RWPE1 (cell line): ENCODE measurements at regions of chr15 and their contacts with region 1.

Region 1: GRCh38 chr15:31326156-31326732 is 391 bp upstream of the KLF13 start:
- DNase-seq: peak; percentile 99
- H3K27ac ChIP-seq: peak overlapping the region; percentile 99
- CTCF ChIP-seq: no peak

Region 2: DNA sequence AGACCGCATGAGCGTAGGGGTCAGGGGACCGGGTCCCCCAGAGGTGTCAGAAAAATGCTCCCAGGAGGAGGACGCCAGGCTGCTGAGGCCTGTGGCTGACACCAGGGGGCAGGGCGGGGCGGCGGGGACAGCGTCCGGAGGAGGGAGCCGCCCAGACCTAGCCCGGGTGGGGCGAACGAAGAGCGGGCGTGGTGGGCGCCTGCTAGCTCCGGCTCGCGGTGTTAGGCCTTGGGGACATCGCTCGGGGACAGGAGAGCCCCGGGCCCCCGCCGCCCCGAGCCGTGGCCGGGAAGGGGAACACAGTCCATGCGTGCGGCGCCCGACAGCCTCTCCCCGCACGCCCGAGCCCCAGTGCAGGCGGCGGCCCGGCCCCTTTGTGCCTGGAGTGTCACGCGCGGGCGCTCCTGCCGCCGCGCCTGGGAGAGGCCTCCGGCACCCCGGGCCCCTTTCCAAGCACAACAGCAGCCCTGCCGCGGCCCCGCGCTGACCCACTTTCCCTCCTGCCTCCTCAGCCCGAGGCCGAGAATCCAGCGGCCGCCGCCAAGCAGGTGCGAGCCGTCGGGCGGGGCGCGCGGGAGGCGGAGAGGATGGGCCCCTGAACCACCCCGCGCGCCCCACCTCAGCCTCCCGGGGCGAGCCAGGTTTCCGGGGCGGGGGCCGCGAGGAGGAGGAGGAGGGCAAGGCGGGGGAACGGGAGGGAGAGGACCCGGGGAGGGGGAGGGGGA is 110.6 kb before region 1 on chr15:
- CTCF ChIA-PET with region 1: no interaction called
- POLR2A ChIA-PET with region 1: interaction called, 11 read pairs
- DNase-seq: peak; percentile 76
- H3K27ac ChIP-seq: peak overlapping the region; percentile 100
- CTCF ChIP-seq: peak; percentile 88

Region 3: DNA sequence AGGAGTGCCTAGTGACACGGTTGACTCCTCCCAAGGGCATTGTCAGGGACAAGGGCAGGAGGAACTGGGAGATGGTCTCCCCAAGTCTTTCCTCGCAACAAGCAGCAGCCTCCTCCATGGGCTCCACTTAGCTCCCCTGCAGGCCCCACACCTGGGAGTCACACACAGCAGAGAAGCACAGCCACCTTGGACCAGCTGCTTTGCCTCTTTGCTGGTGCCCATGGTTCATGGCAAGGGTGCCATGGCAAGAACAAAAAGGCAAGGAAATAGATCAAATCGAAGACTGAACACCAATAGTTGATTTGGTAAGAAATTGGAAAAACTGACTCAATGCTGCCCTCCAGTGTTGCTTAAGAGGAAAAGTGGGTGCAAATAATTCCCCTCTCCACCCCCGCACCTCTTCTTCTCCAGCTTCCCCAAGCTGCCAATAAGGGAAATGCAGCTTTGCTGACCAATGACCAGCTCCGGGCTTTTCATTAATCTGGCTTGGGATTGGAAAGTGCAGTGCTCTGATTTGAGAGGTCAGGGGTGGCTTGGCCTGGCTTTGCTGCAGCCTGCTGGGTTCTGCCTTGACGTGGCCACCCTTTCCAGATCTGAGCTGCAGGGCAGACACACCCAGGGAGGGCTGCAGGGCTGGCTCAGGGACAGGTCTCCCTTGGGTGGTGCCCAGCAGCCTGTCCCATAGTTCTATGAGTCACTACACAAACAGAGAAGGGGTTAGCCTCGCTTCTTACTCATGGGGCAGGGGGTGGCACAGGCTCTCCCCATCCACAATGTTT is 162.4 kb after region 1 on chr15:
- CTCF ChIA-PET with region 1: interaction called, 10 read pairs
- POLR2A ChIA-PET with region 1: no interaction called
- DNase-seq: peak; percentile 93
- H3K27ac ChIP-seq: peak overlapping the region; percentile 90
- CTCF ChIP-seq: peak; percentile 93

Region 4: GRCh38 chr15:32014953-32015352 is 688.7 kb after region 1 on chr15:
- CTCF ChIA-PET with region 1: no interaction called
- POLR2A ChIA-PET with region 1: no interaction called
- DNase-seq: no peak
- H3K27ac ChIP-seq: no peak overlapping the region
- CTCF ChIP-seq: no peak